BJ (cell line): ENCODE measurements at regions of chr11 and their contacts with region 1.

Region 1: DNA sequence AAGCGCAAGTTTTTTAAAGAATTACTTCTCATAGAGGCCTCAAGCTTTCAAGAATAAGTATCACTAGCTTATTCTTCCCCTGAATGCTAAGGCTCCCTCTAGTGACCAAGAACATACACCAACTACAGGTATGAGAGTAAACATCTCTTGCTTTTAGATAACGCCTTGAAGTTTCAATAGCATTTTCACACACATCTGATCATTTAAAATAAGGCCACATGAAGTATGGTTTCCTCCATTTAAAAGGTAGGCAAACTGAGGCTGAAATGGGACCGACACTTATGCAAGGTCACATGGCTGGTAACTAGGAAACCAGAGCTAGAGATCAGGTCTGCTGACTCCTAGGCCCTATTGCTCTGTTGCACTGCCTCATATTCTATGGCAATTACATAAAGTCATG is 66.5 kb downstream of the CCDC34 start:
- DNase-seq: no peak
- H3K4me3 ChIP-seq: no peak overlapping the region
- H3K27me3 ChIP-seq: no peaks in the 10 kb centered on the region
- CTCF ChIP-seq: peak; percentile 74

Region 2: GRCh38 chr11:27183672-27184457 is 112.6 kb before region 1 on chr11:
- CTCF ChIA-PET with region 1: interaction called, 78 read pairs
- POLR2A ChIA-PET with region 1: no interaction called
- DNase-seq: no peak
- H3K4me3 ChIP-seq: no peak overlapping the region
- H3K27me3 ChIP-seq: no peaks in the 10 kb centered on the region
- CTCF ChIP-seq: peak; percentile 67

Region 3: GRCh38 chr11:27201454-27202236 is 94.9 kb before region 1 on chr11:
- CTCF ChIA-PET with region 1: interaction called, 14 read pairs
- POLR2A ChIA-PET with region 1: no interaction called
- DNase-seq: peak; percentile 85
- H3K4me3 ChIP-seq: no peak overlapping the region
- H3K27me3 ChIP-seq: no peaks in the 10 kb centered on the region
- CTCF ChIP-seq: no peak

Region 4: GRCh38 chr11:27281740-27282590 is 14.5 kb before region 1 on chr11:
- CTCF ChIA-PET with region 1: interaction called, 19 read pairs
- POLR2A ChIA-PET with region 1: no interaction called
- DNase-seq: peak; percentile 99
- H3K4me3 ChIP-seq: no peak overlapping the region
- H3K27me3 ChIP-seq: no peaks in the 10 kb centered on the region
- CTCF ChIP-seq: no peak

Region 5: DNA sequence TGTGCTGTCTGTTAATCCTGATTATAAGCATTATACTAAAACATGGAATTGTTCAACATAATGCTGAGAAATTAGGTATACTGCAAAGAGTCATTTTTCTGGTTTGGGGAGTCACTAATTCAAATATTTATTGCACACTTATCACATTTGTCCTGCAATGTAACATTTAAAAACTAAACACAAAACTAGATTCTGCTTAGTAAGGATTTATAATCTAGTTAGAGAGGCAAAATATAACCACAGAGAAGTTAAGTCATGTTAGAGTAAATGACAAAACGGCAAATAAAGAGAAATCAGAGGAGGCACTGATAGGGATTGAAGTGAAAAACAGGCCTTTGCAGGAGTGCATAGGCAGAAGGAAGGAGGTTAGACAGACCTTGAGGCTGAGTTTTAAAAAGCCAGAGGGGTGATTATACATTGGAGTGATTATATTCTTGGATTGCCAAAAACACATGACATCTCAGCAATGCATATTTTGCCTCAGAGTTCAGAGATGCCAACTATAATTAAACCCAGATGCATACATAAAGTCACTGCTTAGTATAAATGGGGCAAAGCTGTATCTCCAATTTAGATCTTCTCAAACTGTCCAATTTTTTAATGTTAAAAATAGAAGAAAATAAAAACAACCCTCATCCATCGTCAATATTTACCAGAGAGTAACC is 16.8 kb after region 1 on chr11:
- CTCF ChIA-PET with region 1: interaction called, 22 read pairs
- POLR2A ChIA-PET with region 1: no interaction called
- DNase-seq: no peak
- H3K4me3 ChIP-seq: no peak overlapping the region
- H3K27me3 ChIP-seq: no peaks in the 10 kb centered on the region
- CTCF ChIP-seq: no peak